ENCODE measurements at regions of chr9 and their contacts with region 1.

Region 1: GRCh38 chr9:86202338-86202882 is 57.0 kb downstream of the C9orf153 start:
- DNase-seq: peak; percentile 17
- H3K4me3 ChIP-seq: no peak overlapping the region
- CTCF ChIP-seq: peak; percentile 75

Region 2: DNA sequence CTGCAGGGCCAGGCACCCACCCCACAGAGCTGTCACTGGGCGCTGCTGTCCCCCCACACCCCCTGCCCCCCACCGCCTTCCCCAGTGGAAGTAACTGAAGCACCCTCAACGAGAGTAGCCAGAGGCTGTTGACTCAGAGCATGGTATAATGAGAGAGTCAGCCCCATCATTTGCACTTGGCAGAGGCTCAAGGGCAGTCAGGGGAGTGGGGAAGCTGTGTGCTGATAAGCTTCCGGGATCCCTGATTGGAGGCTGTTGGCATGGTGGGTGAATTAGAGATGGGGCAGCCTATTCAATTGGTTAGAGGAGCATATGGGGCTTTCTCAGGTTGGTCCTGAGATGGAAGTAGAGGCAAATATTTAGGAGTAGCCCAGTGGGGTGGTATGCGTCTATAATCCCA is 25.9 kb before region 1 on chr9:
- CTCF ChIA-PET with region 1: interaction called, 11 read pairs
- POLR2A ChIA-PET with region 1: no interaction called
- DNase-seq: no peak
- H3K4me3 ChIP-seq: no peak overlapping the region
- CTCF ChIP-seq: no peak

Region 3: GRCh38 chr9:86187121-86187520 is 15.3 kb before region 1 on chr9:
- CTCF ChIA-PET with region 1: interaction called, 17 read pairs
- POLR2A ChIA-PET with region 1: no interaction called
- DNase-seq: no peak
- H3K4me3 ChIP-seq: no peak overlapping the region
- CTCF ChIP-seq: no peak

Region 4: DNA sequence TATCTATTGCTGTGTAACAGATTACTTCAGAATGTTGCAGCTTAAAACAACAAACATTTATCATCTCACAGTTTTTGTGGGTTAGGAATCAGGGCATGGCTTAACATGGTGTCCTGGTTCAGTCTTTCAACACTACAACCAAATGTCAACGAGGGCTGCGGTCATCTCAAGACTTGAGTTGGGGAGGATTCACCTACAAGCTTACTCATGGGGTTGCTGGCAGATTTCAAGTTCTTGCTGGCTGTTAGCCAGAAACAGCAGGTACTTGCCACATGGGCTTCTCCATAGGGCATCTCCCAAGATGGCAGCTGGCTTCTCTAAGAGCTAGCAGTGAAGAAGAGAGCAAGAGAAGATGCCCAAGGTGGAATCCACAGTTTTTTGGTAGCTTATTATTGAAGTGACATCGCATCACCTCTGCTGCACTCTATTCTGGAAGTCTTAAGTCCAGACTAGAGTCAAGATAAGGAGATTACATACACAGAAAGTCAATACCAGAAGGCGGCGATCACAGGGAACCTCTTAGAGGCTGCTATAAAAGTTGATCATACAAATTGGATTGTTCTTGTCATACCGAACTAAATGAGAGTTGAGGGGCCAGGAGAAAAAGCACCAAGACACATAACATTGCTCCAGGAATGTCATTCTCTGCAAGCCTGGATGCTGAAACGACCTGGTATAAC is 14.8 kb after region 1 on chr9:
- CTCF ChIA-PET with region 1: interaction called, 19 read pairs
- POLR2A ChIA-PET with region 1: no interaction called
- DNase-seq: no peak
- H3K4me3 ChIP-seq: no peak overlapping the region
- CTCF ChIP-seq: no peak

Region 5: GRCh38 chr9:86238861-86239770 is 36.7 kb after region 1 on chr9:
- CTCF ChIA-PET with region 1: interaction called, 10 read pairs
- POLR2A ChIA-PET with region 1: no interaction called
- DNase-seq: no peak
- H3K4me3 ChIP-seq: no peak overlapping the region
- CTCF ChIP-seq: no peak

Region 6: DNA sequence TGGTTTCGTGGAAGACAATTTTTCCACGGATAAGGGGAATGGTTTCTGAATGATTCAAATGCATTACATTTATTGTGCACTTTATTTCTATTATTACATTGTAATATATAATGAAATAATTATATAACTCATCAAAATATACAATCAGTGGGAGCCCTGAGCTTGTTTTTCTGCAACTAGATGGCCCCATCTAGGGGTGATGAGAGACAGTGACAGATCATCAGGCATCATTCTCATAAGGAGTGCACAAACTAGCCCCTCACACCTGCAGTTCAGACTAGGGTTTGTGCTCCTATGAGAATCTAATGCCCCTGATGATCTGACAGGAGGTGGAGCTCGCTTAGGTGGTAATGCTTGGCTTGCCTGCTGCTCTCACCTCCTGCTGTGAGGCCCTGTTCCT is 73.6 kb after region 1 on chr9:
- CTCF ChIA-PET with region 1: interaction called, 37 read pairs
- POLR2A ChIA-PET with region 1: no interaction called
- DNase-seq: no peak
- H3K4me3 ChIP-seq: no peak overlapping the region
- CTCF ChIP-seq: peak; percentile 17

Measured in AG04449 (cell line).